HEK293T (cell line): ENCODE measurements at regions of chr20 and their contacts with region 1.

Region 1: DNA sequence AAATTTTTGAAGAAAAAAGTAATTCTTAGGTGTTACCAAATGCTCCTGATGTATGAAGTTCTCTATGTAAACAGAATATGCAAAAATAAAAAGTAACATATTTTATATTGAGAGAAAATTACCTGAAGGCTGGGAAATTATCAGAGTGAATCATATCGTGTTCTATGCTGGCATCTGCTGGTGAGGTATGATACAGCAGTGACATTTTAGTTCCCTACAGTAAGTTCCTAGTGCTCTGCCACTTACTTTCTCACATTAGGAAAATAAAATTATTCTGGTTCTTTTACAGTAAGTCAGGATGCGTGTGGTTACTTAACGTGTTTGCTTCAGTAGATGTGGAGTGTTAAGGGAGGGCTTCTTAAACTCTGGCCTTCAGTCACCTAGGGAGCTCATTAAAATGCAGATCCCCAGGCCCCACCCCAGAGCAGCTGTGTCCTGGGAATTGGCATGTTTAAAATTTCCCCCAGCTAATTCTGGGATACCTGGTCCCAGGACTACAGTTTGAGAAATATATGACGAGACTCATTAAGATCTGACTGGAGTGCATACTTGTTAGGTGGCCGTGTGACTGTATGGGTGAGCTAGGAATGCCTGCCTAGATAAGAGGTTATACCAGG is 3.2 kb downstream of the ACTR5 start:
- DNase-seq: peak; percentile 37

Region 2: GRCh38 chr20:38649275-38649891 is 102.1 kb before region 1 on chr20:
- CTCF ChIA-PET with region 1: interaction called, 11 read pairs
- POLR2A ChIA-PET with region 1: no interaction called
- DNase-seq: peak; percentile 53